BJ (cell line): ENCODE measurements at regions of chr11 and their contacts with region 1.

Region 1: GRCh38 chr11:72413914-72414628 is 20.3 kb downstream of the CLPB start:
- DNase-seq: no peak
- H3K4me3 ChIP-seq: no peak overlapping the region
- H3K27me3 ChIP-seq: no peaks in the 10 kb centered on the region
- CTCF ChIP-seq: peak; percentile 91

Region 2: GRCh38 chr11:72179804-72180396 is 234.2 kb before region 1 on chr11:
- CTCF ChIA-PET with region 1: interaction called, 11 read pairs
- POLR2A ChIA-PET with region 1: no interaction called
- DNase-seq: no peak
- H3K4me3 ChIP-seq: no peak overlapping the region
- H3K27me3 ChIP-seq: no peaks in the 10 kb centered on the region
- CTCF ChIP-seq: no peak

Region 3: GRCh38 chr11:72396041-72396440 is 18.0 kb before region 1 on chr11:
- CTCF ChIA-PET with region 1: interaction called, 12 read pairs
- POLR2A ChIA-PET with region 1: no interaction called
- DNase-seq: no peak
- H3K4me3 ChIP-seq: no peak overlapping the region
- H3K27me3 ChIP-seq: no peaks in the 10 kb centered on the region
- CTCF ChIP-seq: no peak

Region 4: GRCh38 chr11:72425053-72425980 is 11.2 kb after region 1 on chr11:
- CTCF ChIA-PET with region 1: interaction called, 75 read pairs
- POLR2A ChIA-PET with region 1: no interaction called
- DNase-seq: no peak
- H3K4me3 ChIP-seq: no peak overlapping the region
- H3K27me3 ChIP-seq: no peaks in the 10 kb centered on the region
- CTCF ChIP-seq: no peak

Region 5: GRCh38 chr11:72519220-72519881 is 105.3 kb after region 1 on chr11:
- CTCF ChIA-PET with region 1: no interaction called
- POLR2A ChIA-PET with region 1: no interaction called
- DNase-seq: no peak
- H3K4me3 ChIP-seq: no peak overlapping the region; the same call in 1 of the 2 replicates
- H3K27me3 ChIP-seq: peaks cover 4% of the 10 kb centered on the region; the same call in 1 of the 2 replicates
- CTCF ChIP-seq: no peak